ENCODE measurements at regions of chr4 and their contacts with region 1.

Region 1: GRCh38 chr4:87388901-87389300 is 2.1 kb downstream of the HSD17B11 start:
- DNase-seq: no peak

Region 2: DNA sequence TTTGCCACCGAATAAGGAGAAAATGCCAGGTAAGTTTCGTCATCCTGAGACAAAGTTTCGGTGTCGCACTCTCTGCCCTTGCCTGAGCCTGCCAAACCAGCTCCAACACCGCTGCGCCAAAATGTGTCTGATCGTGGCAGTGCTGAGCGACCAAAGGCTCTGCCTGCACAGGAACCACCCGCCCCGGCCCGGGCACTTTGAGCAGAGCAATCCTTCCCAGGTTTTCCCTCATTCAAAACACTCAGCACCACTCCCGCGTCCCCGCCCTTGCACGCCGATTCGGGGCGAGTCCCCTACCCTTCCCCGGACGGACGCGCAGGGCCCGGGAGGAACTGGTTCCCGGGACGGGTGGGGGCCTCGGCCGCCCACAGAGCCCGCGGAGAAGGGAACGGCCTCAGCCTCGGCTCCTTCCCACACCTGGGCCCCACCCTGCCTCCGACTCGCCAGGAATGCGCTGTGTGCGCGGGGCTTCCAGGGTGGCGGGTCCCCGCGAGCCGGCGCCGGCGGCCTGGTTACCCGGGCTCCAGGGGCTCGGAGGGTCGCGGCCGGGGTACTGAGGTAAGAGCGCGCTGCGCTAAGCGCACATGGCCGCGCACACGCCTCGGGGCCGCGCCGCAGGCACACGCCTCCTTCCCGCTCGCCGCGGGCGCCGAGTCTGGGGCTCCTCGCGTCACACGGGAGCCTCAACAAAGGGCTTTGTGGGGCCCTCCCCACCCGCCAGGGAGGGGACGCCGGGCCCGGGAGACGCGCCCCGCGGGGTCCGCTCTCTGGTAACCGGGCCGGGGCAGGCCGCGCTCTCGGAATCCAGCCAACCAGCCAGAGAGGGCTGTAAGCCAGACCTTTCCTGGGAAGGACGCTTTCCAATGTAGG is 496.9 kb before region 1 on chr4 and contains the start of gene C4orf36:
- intact Hi-C with region 1: no loop called
- DNase-seq: peak; percentile 87
- total RNA-seq, gene C4orf36: 0.57 to 0.93 TPM

Region 3: GRCh38 chr4:87258677-87259076 is 130.2 kb before region 1 on chr4:
- intact Hi-C with region 1: no loop called
- DNase-seq: no peak

Region 4: DNA sequence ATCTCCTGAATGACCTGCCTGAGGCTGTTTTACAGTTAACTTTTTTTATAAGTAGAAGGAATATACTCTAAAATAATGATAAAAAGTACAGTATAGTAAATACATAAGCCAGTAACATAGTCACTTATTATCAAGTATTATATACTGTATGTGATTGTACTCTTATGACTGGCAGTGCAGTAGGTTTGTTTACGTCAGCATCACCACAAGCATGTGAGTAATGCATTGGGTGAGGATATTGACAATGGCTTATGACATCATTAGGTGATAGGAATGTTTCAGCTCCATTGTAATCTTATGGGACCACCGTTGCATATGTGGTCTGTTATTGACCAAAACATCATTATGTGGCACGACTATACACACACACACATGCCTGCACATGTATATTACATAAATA is 54.0 kb after region 1 on chr4:
- intact Hi-C with region 1: loop called in 1 of 2 experiments (anchors 10 kb)
- DNase-seq: no peak